GM12878 (cell line): ENCODE measurements at regions of chr7 and their contacts with region 1.

Region 1: DNA sequence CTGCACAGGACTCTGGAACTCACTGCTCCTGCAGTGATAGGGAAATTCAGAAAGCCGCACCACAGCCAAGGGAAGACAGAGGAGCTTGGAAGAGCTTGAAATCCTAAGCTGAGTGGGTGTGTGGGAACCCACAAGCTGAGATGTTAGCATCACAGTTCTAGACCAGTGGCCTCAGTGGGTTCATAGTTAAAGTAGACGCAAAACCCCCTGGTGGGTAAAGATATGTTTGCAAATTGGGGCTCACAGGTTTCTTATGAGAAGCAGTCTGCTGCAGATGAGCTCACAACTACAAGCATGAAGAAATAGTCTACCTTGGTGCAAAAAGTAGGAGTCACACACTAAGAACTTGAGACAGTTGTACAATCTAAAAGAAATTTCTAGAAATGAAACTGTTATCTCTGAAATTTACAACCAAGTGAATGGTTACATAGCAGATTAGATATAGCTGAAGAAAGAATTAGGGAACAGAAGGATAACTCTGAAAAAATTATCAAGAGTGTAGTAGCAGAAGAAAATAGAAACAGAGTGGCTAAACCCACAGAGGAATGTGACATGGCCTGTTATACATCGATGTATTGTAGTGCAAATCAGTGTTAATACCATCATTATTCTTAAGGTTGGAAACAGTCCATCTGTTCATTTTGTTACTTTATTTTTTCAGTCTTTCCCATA is 77.2 kb downstream of the DYNC2I1 start:
- DNase-seq: no peak
- ATAC-seq: no peak
- H3K4me3 ChIP-seq: no peak overlapping the region
- H3K27ac ChIP-seq: no peak overlapping the region
- H3K4me1 ChIP-seq: no peaks in the 10 kb centered on the region
- H3K27me3 ChIP-seq: no peaks in the 10 kb centered on the region
- CTCF ChIP-seq: no peak
- EP300 ChIP-seq: no peak
- POLR2A ChIP-seq: no peak
- RAD21 ChIP-seq: no peak

Region 2: DNA sequence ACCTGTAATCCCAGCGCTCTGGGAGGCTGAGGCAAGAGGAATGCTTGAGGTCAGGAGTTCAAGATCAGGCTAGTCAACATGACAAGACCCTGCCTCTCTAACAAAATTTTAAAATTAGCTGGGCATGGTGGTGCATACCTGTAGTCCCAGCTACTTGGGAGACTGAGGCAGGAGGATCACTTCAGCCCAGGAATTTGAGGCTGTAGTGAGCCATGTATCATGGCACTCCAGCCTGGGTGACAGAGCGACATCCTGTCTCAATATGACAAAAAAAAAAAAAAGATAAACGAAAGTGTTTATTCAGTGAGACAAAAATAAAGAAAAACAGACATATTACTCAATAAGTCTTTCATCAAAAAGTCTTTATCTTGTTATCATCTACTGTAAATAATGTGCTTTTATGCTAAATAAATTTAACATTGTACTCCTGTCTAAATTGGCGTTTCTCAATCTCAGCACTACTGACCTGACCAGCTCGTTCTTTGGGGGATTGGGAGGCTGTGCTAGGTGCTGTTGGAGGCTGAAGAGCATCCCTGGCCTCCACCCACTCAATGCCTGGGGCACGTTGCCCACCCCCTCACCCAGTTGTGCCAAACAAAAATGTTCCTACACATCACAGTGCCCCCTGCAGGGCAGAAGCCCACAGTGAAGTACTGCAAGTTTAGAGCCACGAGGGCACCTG is 286.7 kb before region 1 on chr7:
- CTCF ChIA-PET with region 1: no interaction called
- POLR2A ChIA-PET with region 1: no interaction called
- RAD21 ChIA-PET with region 1: no interaction called
- SMC1A ChIA-PET with region 1: no interaction called
- in situ Hi-C with region 1: no loop called
- intact Hi-C with region 1: no loop called
- DNase-seq: no peak
- ATAC-seq: peak; percentile 77
- H3K4me3 ChIP-seq: no peak overlapping the region
- H3K27ac ChIP-seq: no peak overlapping the region
- H3K4me1 ChIP-seq: no peaks in the 10 kb centered on the region
- H3K27me3 ChIP-seq: no peaks in the 10 kb centered on the region
- CTCF ChIP-seq: peak; percentile 28 to 53 (median 52); a peak in 5 of 6 replicates
- EP300 ChIP-seq: no peak
- POLR2A ChIP-seq: no peak
- RAD21 ChIP-seq: peak; percentile 32; the same call in 1 of the 2 replicates

Region 3: DNA sequence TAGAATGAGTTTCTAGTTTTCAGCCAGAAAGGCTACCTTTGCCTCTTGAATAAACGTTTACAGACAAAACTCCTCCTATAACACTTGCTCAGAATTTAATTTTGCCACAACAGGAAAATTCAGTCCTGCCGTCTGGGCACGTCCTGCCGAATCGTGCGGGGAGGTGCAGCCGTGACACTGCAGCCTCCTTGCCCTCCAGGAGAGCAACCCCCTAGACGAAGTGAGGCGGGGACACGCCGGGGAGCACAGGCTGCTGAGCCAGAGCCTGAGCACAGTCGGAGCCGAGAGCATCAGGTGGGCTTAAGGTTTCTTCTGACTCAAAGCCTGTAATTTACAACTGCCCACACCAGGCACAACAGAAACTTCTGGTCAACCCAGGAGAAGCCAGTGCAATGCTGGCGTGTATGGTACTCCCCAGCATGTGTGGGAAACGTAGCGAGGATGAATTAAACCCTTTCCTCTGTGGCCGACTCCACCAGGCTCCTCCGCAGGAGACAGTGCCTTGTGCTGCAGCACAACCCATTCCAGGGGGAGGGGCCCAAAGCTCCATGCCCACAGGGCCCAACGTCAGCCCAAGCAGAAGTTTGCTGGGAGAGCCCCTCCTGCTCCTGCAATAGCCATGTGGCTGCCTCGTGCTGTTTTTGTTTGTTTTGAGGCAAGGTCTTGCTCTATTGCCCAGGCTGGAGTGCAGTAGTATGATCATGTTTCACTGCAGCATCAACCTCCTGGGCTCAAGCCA is 25.2 kb after region 1 on chr7:
- CTCF ChIA-PET with region 1: no interaction called
- POLR2A ChIA-PET with region 1: no interaction called
- RAD21 ChIA-PET with region 1: no interaction called
- SMC1A ChIA-PET with region 1: no interaction called
- in situ Hi-C with region 1: no loop called
- intact Hi-C with region 1: loop called (anchors 1 kb)
- DNase-seq: no peak
- ATAC-seq: no peak
- H3K4me3 ChIP-seq: no peak overlapping the region
- H3K27ac ChIP-seq: no peak overlapping the region
- H3K4me1 ChIP-seq: no peaks in the 10 kb centered on the region
- H3K27me3 ChIP-seq: no peaks in the 10 kb centered on the region
- CTCF ChIP-seq: no peak
- EP300 ChIP-seq: no peak
- POLR2A ChIP-seq: no peak
- RAD21 ChIP-seq: no peak

Region 4: DNA sequence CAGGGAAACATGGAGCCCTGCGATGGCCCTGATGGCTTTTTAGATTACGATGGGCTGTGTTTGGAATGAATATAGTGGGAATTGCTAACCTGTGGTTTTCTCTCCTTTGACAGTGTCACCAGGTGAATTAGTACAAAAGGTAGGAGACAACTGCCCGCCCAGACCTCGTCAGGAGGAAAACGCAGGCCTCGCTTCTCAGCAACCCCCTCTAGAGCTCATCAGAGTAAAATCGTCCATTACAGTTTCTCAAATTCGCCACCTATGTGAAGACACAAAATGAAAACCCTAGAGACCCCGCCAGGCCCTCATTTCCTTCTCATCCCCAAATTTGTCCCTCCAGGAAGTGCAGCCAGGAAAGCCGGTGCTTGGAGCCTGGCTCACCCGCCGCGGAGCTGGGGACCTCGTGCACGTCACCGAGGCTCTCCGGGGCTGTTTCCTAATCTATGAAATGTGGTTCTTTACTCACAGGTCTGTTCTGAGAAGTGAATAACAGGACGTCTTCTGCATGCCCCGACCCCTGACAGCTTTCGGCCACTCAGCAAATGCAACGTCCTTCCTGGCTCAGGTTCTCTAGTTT is 67.3 kb after region 1 on chr7:
- CTCF ChIA-PET with region 1: no interaction called
- POLR2A ChIA-PET with region 1: no interaction called
- RAD21 ChIA-PET with region 1: no interaction called
- SMC1A ChIA-PET with region 1: no interaction called
- in situ Hi-C with region 1: no loop called
- intact Hi-C with region 1: no loop called
- DNase-seq: no peak
- ATAC-seq: no peak
- H3K4me3 ChIP-seq: no peak overlapping the region
- H3K27ac ChIP-seq: no peak overlapping the region
- H3K4me1 ChIP-seq: no peaks in the 10 kb centered on the region
- H3K27me3 ChIP-seq: no peaks in the 10 kb centered on the region
- CTCF ChIP-seq: no peak
- EP300 ChIP-seq: no peak
- POLR2A ChIP-seq: no peak
- RAD21 ChIP-seq: no peak

Region 5: DNA sequence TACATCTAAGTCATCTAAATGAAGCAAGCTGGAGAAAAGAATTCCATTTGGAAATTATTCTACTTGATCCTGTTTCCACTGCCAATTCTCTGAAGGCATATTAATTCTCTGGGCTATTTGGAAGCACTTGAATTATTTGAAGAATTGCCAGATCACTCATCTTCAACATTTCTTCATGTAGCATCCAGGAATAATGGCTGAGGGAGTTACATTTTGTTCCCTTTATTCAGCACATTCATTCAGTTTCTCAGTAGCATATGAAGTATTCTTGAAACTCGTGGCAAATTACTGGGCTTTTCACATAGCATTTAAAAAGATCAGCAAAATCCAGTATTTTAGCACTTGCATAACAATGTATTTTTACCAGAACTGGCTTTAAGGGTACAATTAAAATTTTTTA is 338.2 kb after region 1 on chr7:
- CTCF ChIA-PET with region 1: no interaction called
- POLR2A ChIA-PET with region 1: no interaction called
- RAD21 ChIA-PET with region 1: no interaction called
- SMC1A ChIA-PET with region 1: no interaction called
- in situ Hi-C with region 1: no loop called
- intact Hi-C with region 1: no loop called
- DNase-seq: no peak
- ATAC-seq: no peak
- H3K4me3 ChIP-seq: no peak overlapping the region
- H3K27ac ChIP-seq: no peak overlapping the region
- H3K4me1 ChIP-seq: no peaks in the 10 kb centered on the region
- H3K27me3 ChIP-seq: no peaks in the 10 kb centered on the region
- CTCF ChIP-seq: no peak
- EP300 ChIP-seq: no peak
- POLR2A ChIP-seq: no peak
- RAD21 ChIP-seq: no peak